Endothelial cell of umbilical vein (primary cell): ENCODE measurements at regions of chr7 and their contacts with region 1.

Region 1: GRCh38 chr7:96321658-96322372 is at the start of gene SLC25A13:
- DNase-seq: peak; percentile 81
- H3K4me3 ChIP-seq: peak within 1 kb of the TSS; percentile 71 to 90 (median 86)
- H3K27ac ChIP-seq: peak within 1 kb of the TSS; percentile 85
- H3K4me1 ChIP-seq: peaks cover 14% of the 10 kb centered on the region
- H3K27me3 ChIP-seq: no peaks in the 10 kb centered on the region
- CTCF ChIP-seq: no peak
- POLR2A ChIP-seq: peak; percentile 74
- total RNA-seq, gene SLC25A13: 34.4 and 36.1 TPM in 2 replicates

Region 2: DNA sequence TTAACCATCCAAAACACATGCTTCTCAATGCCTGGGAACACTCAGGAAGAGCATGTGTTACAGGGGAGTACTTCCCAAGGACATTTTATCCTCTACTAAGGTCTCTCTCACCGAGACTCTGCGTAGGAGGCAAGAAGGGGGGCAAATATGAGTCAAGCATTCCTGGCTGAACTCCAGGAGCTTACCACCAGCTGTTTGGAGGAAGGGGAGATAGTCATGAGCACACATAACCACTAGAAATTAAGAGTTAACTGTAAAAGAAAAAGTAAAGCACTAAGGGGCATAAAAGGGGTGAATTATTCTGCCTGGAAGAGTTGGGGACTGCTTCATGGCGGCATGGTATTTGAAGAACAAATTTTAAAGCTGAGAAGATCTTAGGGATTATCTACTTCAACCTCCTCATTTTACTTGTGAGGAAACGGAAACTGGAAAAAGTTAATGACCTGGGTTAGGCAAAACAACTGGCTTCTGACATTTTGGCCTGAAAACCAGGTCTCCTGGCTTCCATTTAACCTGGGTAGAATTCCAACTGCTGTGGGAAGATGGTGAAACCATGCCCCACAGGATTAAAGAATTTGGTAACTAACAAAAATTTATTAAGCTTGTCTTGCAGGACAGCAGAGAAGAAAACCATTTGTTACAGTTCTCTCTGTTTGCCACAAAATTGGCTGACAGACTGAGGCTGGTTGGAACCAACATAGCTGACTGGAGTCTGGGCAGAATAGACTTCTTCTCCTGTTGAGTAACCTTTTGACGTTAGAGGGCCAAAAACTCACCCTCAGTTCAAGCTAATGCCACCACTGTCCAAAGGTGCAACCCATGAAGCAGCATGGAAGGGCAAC is 85.4 kb before region 1 on chr7:
- CTCF ChIA-PET with region 1: no interaction called
- POLR2A ChIA-PET with region 1: no interaction called
- dilution Hi-C with region 1: no loop called
- intact Hi-C with region 1: loop called (anchors 1 kb)
- DNase-seq: peak; percentile 97
- H3K4me3 ChIP-seq: no peak overlapping the region
- H3K27ac ChIP-seq: peak overlapping the region; percentile 2
- H3K4me1 ChIP-seq: peaks cover 18% of the 10 kb centered on the region
- H3K27me3 ChIP-seq: no peaks in the 10 kb centered on the region
- CTCF ChIP-seq: no peak
- POLR2A ChIP-seq: no peak

Region 3: DNA sequence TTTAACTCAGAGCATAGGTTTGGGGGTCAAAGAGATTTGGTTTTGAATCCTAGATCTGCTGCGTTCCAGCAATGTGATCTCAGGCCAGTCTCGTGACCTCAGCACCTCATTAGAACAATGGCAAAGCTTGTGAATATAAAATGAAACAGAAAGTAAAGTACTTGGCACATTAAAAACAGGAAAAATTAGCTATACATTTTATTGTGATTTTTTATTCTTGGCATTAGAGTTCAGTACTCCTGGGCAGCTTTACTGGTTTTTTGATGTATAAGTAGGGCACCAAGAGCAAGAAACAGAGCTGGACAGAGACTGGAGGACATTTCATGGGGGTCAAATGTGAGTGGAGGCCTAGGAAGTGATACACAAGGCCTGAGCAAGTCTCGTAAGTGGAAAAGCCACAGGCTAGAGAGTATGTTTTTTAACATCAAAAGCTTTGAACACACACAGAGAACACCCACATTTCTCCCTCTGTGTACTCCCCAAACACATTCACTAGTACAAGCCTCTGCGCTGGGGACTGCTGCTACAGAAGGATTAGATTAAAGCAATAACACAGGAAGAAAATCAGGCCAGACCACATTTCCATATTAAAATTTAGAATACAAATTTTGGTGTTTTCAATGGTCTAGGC is 157.3 kb after region 1 on chr7:
- CTCF ChIA-PET with region 1: no interaction called
- POLR2A ChIA-PET with region 1: no interaction called
- dilution Hi-C with region 1: no loop called
- intact Hi-C with region 1: loop called (anchors 5 kb)
- DNase-seq: peak; percentile 64
- H3K4me3 ChIP-seq: no peak overlapping the region
- H3K27ac ChIP-seq: no peak overlapping the region
- H3K4me1 ChIP-seq: no peaks in the 10 kb centered on the region
- H3K27me3 ChIP-seq: no peaks in the 10 kb centered on the region
- CTCF ChIP-seq: no peak
- POLR2A ChIP-seq: no peak

Region 4: DNA sequence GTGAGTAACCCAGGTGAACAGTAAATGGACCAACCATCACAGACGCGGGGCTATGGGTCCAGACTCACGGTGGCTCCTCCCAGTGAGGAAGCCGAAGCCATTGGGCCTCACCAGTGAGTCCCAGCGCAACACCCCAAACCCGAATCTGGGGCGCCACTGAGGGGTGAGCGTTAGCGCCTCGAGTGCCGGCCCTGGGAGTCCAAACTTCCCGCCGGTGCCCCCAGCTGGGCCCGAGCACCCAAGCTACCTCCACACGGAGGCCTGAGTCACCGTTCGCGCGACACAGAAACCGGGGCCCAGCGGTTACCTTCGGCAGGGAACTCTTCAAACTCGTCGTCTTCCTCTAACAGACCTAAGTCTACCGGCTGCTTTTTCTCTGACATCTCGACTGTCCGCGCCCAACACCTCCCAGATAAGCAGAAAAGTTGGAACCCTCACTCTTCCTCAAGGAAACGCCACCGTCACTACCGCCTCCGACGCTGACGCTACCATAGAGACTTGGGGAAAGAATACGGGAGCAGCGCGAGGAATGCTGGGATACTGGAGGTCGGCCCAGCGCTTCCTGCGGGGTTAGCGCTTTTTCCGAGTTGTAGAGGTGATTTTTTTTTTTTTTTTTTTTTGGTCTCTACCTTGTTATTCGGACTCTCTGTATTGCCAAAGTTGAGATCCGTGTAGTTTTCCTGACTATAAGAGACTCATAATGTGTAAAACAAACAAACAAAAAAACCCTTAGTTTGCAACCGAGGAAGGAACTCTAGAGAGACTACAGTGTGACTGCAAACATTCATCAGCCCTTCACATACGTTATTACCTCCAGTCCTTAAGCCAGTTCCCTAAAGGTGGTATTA is 387.8 kb after region 1 on chr7 and contains the start of gene SEM1:
- CTCF ChIA-PET with region 1: no interaction called
- POLR2A ChIA-PET with region 1: no interaction called
- dilution Hi-C with region 1: no loop called
- intact Hi-C with region 1: loop called (anchors 5 kb)
- DNase-seq: peak; percentile 91
- H3K4me3 ChIP-seq: peak within 1 kb of the TSS; percentile 70 to 98 (median 73)
- H3K27ac ChIP-seq: peak within 1 kb of the TSS; percentile 96
- H3K4me1 ChIP-seq: peaks cover 15% of the 10 kb centered on the region
- H3K27me3 ChIP-seq: peaks cover 0 to 4% of the 10 kb centered on the region in 2 experiments
- CTCF ChIP-seq: no peak
- POLR2A ChIP-seq: peak; percentile 80
- total RNA-seq, gene SEM1: 81.6 and 94.7 TPM in 2 replicates

Region 5: DNA sequence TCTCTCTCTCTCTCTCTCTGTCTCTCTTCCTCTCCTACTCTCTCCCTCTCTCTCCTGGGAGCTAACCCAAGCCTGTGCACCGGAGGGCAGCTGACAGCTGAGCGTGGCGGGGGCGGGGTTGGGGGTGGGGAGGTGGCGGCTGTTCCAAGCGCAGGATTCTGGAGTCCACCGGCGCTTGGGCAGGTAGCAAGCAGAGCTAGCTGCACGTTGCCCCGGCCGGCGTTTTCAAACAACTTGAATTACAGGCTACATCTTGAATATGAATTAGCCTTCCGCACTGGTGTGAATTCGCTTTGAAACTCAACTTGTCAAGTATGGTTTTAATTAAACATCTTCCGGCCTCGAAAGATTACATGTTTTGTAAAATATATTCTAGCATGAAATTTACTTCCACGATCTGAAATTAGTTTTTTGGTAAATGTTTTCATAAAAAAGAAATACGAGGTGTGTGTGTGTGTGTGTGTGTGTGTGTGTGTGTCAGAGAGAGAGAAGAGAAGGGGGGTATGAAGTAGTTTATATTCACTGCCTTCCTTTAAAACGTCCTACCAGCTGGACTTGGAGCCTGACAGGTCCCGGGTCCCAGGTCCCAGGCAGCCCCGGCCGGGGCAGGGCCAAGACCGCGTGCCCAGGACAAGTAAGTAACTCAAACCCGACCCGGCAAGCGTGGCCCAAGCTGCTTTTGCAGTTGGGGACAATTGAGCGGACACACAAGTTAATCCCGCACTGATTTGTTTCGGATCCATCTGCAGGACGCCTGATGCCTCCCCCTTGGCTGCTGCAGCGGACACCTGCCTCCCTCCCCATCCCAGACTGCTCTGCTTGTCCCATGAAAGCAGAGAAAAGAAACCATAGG is 674.5 kb after region 1 on chr7:
- CTCF ChIA-PET with region 1: no interaction called
- POLR2A ChIA-PET with region 1: no interaction called
- dilution Hi-C with region 1: no loop called
- intact Hi-C with region 1: no loop called
- DNase-seq: no peak
- H3K4me3 ChIP-seq: no peak overlapping the region
- H3K27ac ChIP-seq: no peak overlapping the region
- H3K4me1 ChIP-seq: no peaks in the 10 kb centered on the region
- H3K27me3 ChIP-seq: peaks cover 90 to 97% of the 10 kb centered on the region in 2 experiments
- CTCF ChIP-seq: no peak
- POLR2A ChIP-seq: no peak